HEK293 (cell line): ENCODE measurements at regions of chr11 and their contacts with region 1.

Region 1: GRCh38 chr11:96342961-96343711 is at the start of gene MAML2:
- H3K4me3 ChIP-seq: peak within 1 kb of the TSS; percentile 73
- H3K27ac ChIP-seq: peak within 1 kb of the TSS; percentile 60; the same call in 1 of the 2 replicates
- H3K4me1 ChIP-seq: peaks cover under 1% of the 10 kb centered on the region; the same call in 1 of the 2 replicates
- CTCF ChIP-seq: peak; percentile 67

Region 2: DNA sequence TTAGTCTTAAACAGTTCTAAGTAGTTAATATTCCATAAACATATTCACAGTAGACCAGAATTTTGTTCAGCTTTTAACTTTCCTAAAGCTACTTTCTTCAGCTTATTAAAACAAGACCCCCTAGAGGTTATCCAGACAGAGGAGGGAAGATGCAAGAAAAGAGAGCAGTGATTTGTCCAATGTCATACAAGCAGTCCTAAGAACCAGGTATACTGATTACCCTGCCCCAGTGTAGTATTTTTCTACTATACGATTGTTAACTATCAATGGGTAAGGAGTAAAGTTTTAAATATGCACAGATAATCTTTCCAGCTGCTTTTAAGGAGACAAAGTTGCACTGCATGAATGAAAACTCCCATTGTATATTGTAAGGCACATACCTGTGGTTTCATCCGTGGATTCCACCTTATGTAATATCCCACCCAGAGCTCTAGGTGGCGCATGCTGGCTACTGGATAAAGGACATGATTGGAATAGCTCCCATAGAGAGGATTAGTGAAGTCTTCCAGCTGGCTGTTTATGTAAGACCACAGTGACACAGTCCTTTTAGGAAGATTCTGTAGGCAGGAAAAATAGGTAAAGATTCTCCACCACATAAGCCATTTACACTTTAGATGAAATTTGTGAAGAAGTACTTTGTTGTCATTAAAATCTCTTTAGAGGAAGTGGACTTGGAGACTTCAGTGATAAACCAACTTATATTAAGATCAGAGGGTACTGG is 507.2 kb before region 1 on chr11:
- CTCF ChIA-PET with region 1: interaction called, 27 read pairs
- POLR2A ChIA-PET with region 1: interaction called, 5 read pairs
- H3K4me3 ChIP-seq: no peak overlapping the region
- H3K27ac ChIP-seq: no peak overlapping the region
- H3K4me1 ChIP-seq: no peaks in the 10 kb centered on the region
- CTCF ChIP-seq: no peak

Region 3: GRCh38 chr11:95999599-96000406 is 343.3 kb before region 1 on chr11:
- CTCF ChIA-PET with region 1: no interaction called
- POLR2A ChIA-PET with region 1: no interaction called
- H3K4me3 ChIP-seq: no peak overlapping the region
- H3K27ac ChIP-seq: no peak overlapping the region
- H3K4me1 ChIP-seq: no peaks in the 10 kb centered on the region
- CTCF ChIP-seq: no peak

Region 4: GRCh38 chr11:96054870-96055705 is 288.0 kb before region 1 on chr11:
- CTCF ChIA-PET with region 1: interaction called, 46 read pairs
- POLR2A ChIA-PET with region 1: interaction called, 3 read pairs
- H3K4me3 ChIP-seq: no peak overlapping the region
- H3K27ac ChIP-seq: no peak overlapping the region
- H3K4me1 ChIP-seq: no peaks in the 10 kb centered on the region
- CTCF ChIP-seq: no peak

Region 5: DNA sequence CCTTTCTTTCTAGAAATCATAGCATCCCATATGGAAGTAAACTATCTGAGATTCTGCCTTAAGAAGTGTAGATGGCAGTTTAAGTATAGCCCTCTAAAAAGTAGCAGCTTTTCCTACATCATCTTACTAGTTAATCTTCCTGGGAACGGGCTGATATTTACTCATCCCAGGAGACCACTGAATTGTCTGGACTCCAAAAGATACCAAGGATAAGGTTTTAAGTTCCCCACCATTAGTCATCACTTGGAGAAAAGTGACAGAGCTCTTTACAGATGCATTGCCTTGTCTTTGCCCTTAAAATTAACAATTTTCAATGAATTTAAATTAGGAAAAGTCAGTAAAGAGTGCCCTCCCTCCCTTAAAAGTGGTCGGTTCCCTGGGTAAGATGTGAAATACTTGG is 129.6 kb before region 1 on chr11:
- CTCF ChIA-PET with region 1: interaction called, 12 read pairs
- POLR2A ChIA-PET with region 1: no interaction called
- H3K4me3 ChIP-seq: no peak overlapping the region
- H3K27ac ChIP-seq: no peak overlapping the region
- H3K4me1 ChIP-seq: no peaks in the 10 kb centered on the region; the same call in 1 of the 2 replicates
- CTCF ChIP-seq: no peak

Region 6: GRCh38 chr11:96242971-96243647 is 100.0 kb before region 1 on chr11:
- CTCF ChIA-PET with region 1: interaction called, 14 read pairs
- POLR2A ChIA-PET with region 1: interaction called, 23 read pairs
- H3K4me3 ChIP-seq: peak overlapping the region; percentile 30
- H3K27ac ChIP-seq: peak overlapping the region; percentile 79
- H3K4me1 ChIP-seq: peaks cover 6% of the 10 kb centered on the region
- CTCF ChIP-seq: no peak

Region 7: GRCh38 chr11:96324960-96325359 is 18.2 kb before region 1 on chr11:
- CTCF ChIA-PET with region 1: interaction called, 14 read pairs
- POLR2A ChIA-PET with region 1: interaction called, 4 read pairs
- H3K4me3 ChIP-seq: no peak overlapping the region
- H3K27ac ChIP-seq: no peak overlapping the region
- H3K4me1 ChIP-seq: peaks cover 9% of the 10 kb centered on the region
- CTCF ChIP-seq: no peak

Region 8: DNA sequence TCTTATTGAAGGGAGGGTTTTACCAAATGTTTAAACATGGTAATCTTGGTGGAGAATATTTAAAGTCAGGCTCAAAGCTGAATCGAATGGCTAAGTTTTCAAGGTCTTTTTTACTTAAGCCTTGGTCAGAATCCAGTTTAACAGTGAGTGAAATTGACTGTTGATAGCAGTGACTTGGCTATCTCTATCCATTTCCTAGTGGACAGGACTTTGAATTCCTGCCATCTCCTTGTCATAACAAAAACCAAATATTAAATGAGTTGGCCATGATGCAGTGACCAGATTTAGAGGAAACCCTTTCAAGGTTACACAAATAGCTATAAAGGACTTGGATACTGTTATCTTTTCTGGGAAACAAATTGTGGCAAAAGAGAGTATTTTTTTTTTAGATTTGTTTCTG is 138.6 kb after region 1 on chr11:
- CTCF ChIA-PET with region 1: no interaction called
- POLR2A ChIA-PET with region 1: no interaction called
- H3K4me3 ChIP-seq: no peak overlapping the region
- H3K27ac ChIP-seq: no peak overlapping the region
- H3K4me1 ChIP-seq: no peaks in the 10 kb centered on the region
- CTCF ChIP-seq: no peak